Natural killer cell (primary cell): ENCODE measurements at regions of chr11 and their contacts with region 1.

Region 1: GRCh38 chr11:797296-798092 is 587 bp downstream of the SLC25A22 start:
- DNase-seq: peak; percentile 77 to 90
- ATAC-seq: peak; percentile 61 to 71 (median 66)
- H3K4me3 ChIP-seq: peak overlapping the region; percentile 91
- H3K4me3 Mint-ChIP-seq: peak overlapping the region; percentile 95
- H3K27ac ChIP-seq: peak overlapping the region; percentile 96
- H3K27ac Mint-ChIP-seq: peak overlapping the region; percentile 93 to 95
- H3K4me1 ChIP-seq: peaks cover 36% of the 10 kb centered on the region
- H3K4me1 Mint-ChIP-seq: peaks cover 0 to 18% of the 10 kb centered on the region in 2 donors
- H3K27me3 ChIP-seq: no peaks in the 10 kb centered on the region
- H3K27me3 Mint-ChIP-seq: no peaks in the 10 kb centered on the region
- CTCF ChIP-seq: no peak

Region 2: DNA sequence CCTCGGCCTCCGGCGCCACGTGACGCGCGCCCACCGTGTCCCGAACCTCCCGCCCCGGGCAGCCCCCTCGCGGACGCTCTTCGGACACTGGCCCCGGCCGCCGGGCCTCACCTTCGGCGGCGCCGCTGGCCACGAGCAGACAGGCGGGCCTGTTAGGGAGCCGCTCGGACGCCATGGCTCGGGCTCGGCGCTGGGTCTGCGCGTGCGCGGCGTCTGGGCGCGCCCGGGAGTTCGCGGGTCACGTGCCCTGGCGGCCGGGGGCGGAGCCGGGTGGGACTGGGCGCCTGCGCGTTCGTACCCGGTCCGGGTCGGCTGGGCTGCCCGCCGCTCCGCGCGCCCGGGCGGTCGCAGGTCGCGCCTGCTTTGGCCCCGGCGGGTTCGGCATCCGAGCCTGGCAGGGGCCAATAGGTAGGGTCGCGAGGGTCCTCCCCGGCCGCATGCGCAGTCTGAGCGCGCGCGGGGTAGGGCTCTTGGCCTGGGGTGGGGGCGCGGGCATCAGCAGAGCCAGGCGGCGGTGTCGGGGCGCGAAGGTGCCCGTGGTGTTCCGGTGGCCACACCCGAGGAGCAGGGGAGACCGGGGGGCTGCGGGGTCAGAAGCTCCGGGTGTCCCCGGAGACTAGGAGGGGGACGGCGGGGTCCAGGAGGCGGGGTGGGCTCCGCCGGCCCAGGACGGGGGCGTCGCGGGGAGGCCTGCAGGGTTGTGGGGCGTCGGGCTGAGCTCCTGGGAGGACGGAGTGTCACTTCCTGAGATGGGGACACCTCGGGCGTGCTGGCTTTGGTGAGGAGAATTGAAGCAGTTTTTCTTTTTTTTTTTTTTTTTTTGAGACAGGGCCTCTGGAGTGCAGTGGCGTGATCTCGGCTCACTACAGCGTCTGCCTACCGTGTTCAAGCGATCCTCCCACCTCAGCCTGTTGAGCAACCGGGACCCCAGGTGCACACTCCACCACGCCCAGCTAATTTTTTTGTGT is 19.9 kb before region 1 on chr11 and contains the start of gene GATD1:
- intact Hi-C with region 1: loop called (anchors 1 kb)
- DNase-seq: peak; percentile 96
- ATAC-seq: peak; percentile 90 to 93 (median 92)
- H3K4me3 ChIP-seq: peak within 1 kb of the TSS; percentile 56
- H3K4me3 Mint-ChIP-seq: peak within 1 kb of the TSS; percentile 83
- H3K27ac ChIP-seq: peak within 1 kb of the TSS; percentile 17
- H3K27ac Mint-ChIP-seq: peak within 1 kb of the TSS; percentile 31 to 75
- H3K4me1 ChIP-seq: peaks cover 34% of the 10 kb centered on the region
- H3K4me1 Mint-ChIP-seq: peaks cover 0 to 13% of the 10 kb centered on the region in 2 donors
- H3K27me3 ChIP-seq: no peaks in the 10 kb centered on the region
- H3K27me3 Mint-ChIP-seq: no peaks in the 10 kb centered on the region
- CTCF ChIP-seq: no peak
- total RNA-seq, gene GATD1: 40.4 to 43.1 (median 42.1) TPM

Region 3: GRCh38 chr11:809287-810039 is 12.0 kb after region 1 on chr11 and contains the start of gene RPLP2:
- intact Hi-C with region 1: loop called (anchors 1 kb)
- DNase-seq: peak; percentile 99
- ATAC-seq: peak; percentile 81 to 93 (median 84)
- H3K4me3 ChIP-seq: peak within 1 kb of the TSS; percentile 50
- H3K4me3 Mint-ChIP-seq: peak within 1 kb of the TSS; percentile 90
- H3K27ac ChIP-seq: peak within 1 kb of the TSS; percentile 83
- H3K27ac Mint-ChIP-seq: peak within 1 kb of the TSS; percentile 94 to 95
- H3K4me1 ChIP-seq: peaks cover 37% of the 10 kb centered on the region
- H3K4me1 Mint-ChIP-seq: peaks cover 22 to 27% of the 10 kb centered on the region in 2 donors
- H3K27me3 ChIP-seq: no peaks in the 10 kb centered on the region
- H3K27me3 Mint-ChIP-seq: no peaks in the 10 kb centered on the region
- CTCF ChIP-seq: no peak
- total RNA-seq, gene RPLP2: 1,482 to 1,846 (median 1,534) TPM